SK-N-SH (cell line): ENCODE measurements at regions of chr12 and their contacts with region 1.

Region 1: DNA sequence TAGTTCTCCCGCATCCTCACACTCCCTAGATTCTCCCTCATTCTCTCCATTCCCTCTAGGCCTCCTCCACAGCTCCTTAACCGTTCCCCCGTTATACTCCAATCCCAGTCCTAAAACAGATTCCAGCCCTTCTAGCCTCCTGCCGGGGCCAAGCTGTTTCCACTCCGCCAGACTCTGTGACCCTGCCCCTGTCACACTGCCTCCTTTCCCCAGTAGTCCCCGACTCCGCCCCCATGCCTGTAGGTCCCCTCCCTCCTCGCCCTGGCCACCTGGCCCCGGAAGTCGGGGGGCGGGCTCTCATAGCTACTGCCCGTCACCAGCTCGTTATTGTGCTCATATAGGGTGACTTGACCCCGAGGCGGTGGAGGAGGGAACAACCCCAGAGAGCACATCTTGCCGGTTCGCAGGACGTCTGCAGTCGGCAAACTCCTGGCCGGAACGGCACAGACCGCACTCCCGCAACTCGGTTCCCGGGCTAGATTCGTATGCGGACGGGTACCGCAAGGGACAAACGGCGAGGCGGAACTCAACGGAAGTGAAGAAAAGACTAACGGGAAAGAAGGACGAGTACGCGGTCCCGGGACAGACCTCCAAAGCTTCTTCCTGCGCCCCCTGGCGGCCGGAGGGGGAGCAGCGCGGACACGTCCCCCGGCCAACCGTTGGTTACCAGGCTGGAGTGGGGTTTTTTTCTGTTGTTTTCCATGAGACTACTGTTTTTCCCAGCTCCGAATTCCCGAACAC is at the start of gene AAAS:
- DNase-seq: peak; percentile 97
- H3K4me3 ChIP-seq: peak within 1 kb of the TSS; percentile 69 to 88
- H3K27ac ChIP-seq: peak within 1 kb of the TSS; percentile 86 to 94
- H3K4me1 ChIP-seq: peaks cover 7 to 18% of the 10 kb centered on the region in 2 experiments; a peak in 3 of 4 replicates
- H3K27me3 ChIP-seq: no peaks in the 10 kb centered on the region
- CTCF ChIP-seq: peak; percentile 97
- EP300 ChIP-seq: no peak
- RAD21 ChIP-seq: peak; percentile 27
- polyA plus RNA-seq, gene AAAS: 64.9 and 70.6 TPM in 2 replicates

Region 2: DNA sequence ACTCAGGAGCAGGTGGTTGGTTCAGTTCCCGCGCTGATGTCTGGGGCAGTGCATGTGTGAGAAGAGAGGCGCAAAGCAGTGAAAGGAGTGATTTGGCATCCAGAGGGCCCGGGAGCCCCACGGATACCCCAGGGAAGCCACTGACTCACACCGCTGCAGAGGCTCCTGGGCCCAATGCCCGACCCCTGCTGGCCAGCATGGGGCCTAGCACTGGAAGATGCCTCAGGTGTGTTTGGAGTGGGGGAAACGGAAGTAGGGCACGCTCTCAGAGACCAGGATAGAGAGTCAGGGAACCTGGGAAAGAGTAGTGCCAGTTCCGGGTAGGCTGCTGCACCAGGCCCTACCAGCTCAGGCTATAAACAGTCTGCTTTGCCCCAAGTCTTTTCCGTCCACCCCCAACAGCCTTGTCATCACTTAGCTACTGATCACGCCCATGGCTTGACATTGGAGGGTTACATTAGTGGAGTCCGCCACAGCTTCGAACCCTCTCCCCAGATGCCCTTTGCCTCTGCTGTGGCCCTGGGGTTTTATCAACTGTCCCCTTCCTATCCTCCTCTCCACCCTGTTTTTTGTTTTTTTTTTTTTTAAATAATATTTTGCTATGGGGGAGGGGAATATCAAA is 131.0 kb before region 1 on chr12:
- CTCF ChIA-PET with region 1: interaction called, 10 read pairs
- POLR2A ChIA-PET with region 1: no interaction called
- DNase-seq: peak; percentile 79
- H3K4me3 ChIP-seq: no peak overlapping the region
- H3K27ac ChIP-seq: no peak overlapping the region
- H3K4me1 ChIP-seq: peaks cover 0 to 12% of the 10 kb centered on the region in 2 experiments; a peak in 1 of 4 replicates
- H3K27me3 ChIP-seq: no peaks in the 10 kb centered on the region
- CTCF ChIP-seq: peak; percentile 73
- EP300 ChIP-seq: no peak
- RAD21 ChIP-seq: peak; percentile 51

Region 3: GRCh38 chr12:53295070-53295890 is 26.0 kb before region 1 on chr12 and contains the start of gene PFDN5:
- CTCF ChIA-PET with region 1: interaction called, 41 read pairs
- POLR2A ChIA-PET with region 1: interaction called, 19 read pairs
- DNase-seq: peak; percentile 88
- H3K4me3 ChIP-seq: peak within 1 kb of the TSS; percentile 83 to 91
- H3K27ac ChIP-seq: peak within 1 kb of the TSS; percentile 88 to 96
- H3K4me1 ChIP-seq: peaks cover 11 to 17% of the 10 kb centered on the region in 2 experiments
- H3K27me3 ChIP-seq: no peaks in the 10 kb centered on the region
- CTCF ChIP-seq: no peak
- EP300 ChIP-seq: no peak; a peak in 1 of 4 replicates
- RAD21 ChIP-seq: 0 out of 2 replicates have a peak, but pooled peaks have one; percentile 1
- polyA plus RNA-seq, gene PFDN5: 1,198 and 1,880 TPM in 2 replicates

Region 4: GRCh38 chr12:53344824-53345485 is 23.7 kb after region 1 on chr12:
- CTCF ChIA-PET with region 1: interaction called, 294 read pairs
- POLR2A ChIA-PET with region 1: interaction called, 105 read pairs
- DNase-seq: peak; percentile 93
- H3K4me3 ChIP-seq: peak overlapping the region; percentile 53 to 72
- H3K27ac ChIP-seq: peak overlapping the region; percentile 71 to 74
- H3K4me1 ChIP-seq: peaks cover 0 to 14% of the 10 kb centered on the region in 2 experiments; a peak in 2 of 4 replicates
- H3K27me3 ChIP-seq: no peaks in the 10 kb centered on the region
- CTCF ChIP-seq: peak; percentile 83
- EP300 ChIP-seq: peak in 1 of 2 experiments; percentile 30; a peak in 1 of 4 replicates
- RAD21 ChIP-seq: peak; percentile 73

Region 5: DNA sequence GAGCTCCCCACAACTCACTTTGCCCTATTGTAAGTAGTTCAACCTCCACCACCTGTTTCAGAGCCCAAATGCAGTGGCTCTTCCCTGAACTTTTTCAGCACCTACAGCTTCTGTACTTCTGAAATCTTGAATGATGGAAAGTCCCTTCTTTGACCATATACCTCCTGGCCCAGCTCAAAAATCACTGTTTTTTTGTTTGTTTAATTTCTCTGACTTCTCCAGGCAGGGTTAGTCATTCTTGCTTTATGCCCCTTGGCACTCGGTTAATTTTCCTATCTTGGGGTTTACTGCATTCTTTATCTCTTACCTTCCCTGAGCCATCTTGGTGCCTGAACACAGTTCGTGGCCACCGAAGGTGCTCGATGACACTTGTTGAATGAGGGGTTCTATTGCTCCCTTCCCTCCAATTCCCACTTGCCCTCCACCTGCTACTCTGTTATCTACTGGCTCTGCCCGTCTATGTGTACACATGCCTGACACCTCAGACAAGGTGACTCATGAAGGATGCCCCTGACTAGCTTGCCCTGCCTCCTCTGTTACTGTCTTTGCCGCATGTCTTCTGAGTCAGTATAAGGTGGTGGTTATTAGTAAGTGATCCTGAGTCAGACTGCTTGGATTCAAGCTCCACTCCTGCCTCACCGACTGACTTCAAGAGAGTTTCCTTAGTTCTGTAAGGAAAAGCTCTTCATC is 106.8 kb after region 1 on chr12:
- CTCF ChIA-PET with region 1: interaction called, 97 read pairs
- POLR2A ChIA-PET with region 1: no interaction called
- DNase-seq: no peak
- H3K4me3 ChIP-seq: no peak overlapping the region
- H3K27ac ChIP-seq: no peak overlapping the region
- H3K4me1 ChIP-seq: peaks cover 8 to 11% of the 10 kb centered on the region in 2 experiments; a peak in 3 of 4 replicates
- H3K27me3 ChIP-seq: no peaks in the 10 kb centered on the region
- CTCF ChIP-seq: no peak
- EP300 ChIP-seq: no peak
- RAD21 ChIP-seq: no peak

Region 6: DNA sequence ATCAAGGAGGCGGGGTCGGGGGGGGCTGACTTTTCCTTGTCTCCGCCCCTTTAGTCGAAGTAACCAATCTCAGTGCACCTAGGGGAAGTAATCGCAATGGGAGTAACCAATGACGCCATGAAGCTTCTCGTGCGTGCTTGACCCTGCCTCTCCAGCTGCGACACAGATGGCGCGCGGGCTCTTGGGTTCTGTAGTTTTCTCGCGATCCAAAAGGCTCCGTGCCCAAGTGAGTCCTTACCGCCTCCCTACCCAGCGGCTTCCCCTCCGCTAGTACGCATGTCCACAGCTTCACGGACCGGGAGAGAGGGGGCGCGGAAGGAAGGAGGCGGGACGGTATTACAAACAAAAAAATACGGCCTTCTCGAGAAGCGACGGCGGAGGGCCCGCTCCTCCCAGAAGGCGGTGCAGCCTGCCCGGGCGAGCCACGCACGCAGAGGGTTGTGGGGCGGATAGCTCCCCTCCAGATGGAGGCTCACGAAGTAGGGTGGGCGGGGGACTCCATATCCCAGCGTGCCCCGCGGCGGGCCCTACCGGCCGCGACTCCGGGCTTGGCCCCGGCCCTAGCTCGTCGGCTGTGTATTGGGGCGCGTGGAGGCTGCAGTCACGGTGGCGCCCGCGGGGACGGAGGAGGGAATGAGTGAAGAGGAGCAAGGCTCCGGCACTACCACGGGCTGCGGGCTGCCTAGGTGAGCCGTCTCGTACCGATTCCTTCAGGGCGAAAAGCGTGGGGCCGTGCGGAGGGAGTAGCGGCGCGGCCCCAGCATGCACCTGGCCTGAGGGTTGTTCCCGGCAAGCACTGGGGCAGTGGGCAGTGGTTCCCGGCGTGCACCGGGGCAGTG is 179.8 kb after region 1 on chr12 and contains the start of gene TARBP2:
- CTCF ChIA-PET with region 1: interaction called, 46 read pairs
- POLR2A ChIA-PET with region 1: interaction called, 18 read pairs
- DNase-seq: peak; percentile 92
- H3K4me3 ChIP-seq: peak within 1 kb of the TSS; percentile 52 to 75
- H3K27ac ChIP-seq: peak within 1 kb of the TSS; percentile 94 to 100
- H3K4me1 ChIP-seq: peaks cover 33 to 37% of the 10 kb centered on the region in 2 experiments
- H3K27me3 ChIP-seq: no peaks in the 10 kb centered on the region
- CTCF ChIP-seq: no peak
- EP300 ChIP-seq: no peak
- RAD21 ChIP-seq: no peak
- polyA plus RNA-seq, gene TARBP2: 57.8 and 69.8 TPM in 2 replicates